ENCODE measurements at regions of chr19 and their contacts with region 1.

Region 1: DNA sequence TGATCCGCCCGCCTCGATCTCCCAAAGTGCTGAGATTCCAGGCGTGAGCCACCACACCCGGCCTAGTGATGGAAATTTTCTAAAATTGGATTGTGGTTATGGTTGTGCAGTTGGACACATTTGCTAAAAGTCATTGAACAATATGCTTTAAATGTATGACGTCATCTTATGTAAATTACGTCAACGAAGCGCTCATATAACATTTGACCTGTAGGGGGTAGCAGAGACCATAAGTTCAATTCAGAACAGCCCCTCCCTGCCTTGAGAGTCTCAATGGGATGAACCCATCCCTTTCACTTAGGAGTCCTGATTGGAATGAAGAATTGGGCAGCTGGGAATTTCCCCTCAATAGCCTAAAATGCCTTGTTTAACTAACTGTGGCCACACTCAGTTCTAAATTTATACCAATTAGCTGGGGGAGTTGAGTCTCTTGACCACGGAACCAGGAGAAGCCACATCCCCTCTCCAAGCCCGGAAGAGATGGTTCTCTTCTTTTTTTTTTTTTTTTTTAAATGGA is 15.3 kb upstream of the TLE6 start:
- DNase-seq: peak; percentile 49 to 91
- H3K4me3 ChIP-seq: peak overlapping the region in 1 of 4 donors; percentile 15
- H3K27ac ChIP-seq: no peak overlapping the region
- H3K4me1 ChIP-seq: peaks cover 0 to 10% (median 4%) of the 10 kb centered on the region in 4 donors
- H3K27me3 ChIP-seq: no peaks in the 10 kb centered on the region
- CTCF ChIP-seq: peak in 5 of 7 experiments; percentile 48 to 95 (median 80)
- EP300 ChIP-seq: no peak
- POLR2A ChIP-seq: no peak

Region 2: DNA sequence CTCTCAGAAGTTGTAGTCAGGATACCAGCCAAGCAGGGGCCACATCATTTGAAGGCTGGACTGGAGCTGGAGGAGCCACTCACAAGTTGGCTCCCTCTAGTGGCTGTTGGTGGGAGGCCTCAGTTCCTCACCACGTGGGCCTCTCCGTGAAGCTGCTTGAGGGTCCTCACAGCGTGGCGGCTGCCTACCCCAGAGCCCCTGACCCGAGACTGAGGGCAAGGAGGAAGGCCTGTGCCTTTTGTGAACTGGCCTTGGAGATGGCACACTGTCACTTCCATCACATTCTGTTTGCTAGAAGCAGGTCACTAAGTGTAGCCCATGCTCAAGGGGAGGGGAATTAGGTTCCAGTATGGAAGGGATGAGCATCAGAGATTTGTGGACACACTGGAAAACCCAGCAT is 146.7 kb after region 1 on chr19:
- intact Hi-C with region 1: loop called (anchors 5 kb)
- DNase-seq: peak; percentile 69 to 83
- H3K4me3 ChIP-seq: no peak overlapping the region
- H3K27ac ChIP-seq: no peak overlapping the region
- H3K4me1 ChIP-seq: peaks cover 16 to 57% (median 49%) of the 10 kb centered on the region in 4 donors
- H3K27me3 ChIP-seq: no peaks in the 10 kb centered on the region
- CTCF ChIP-seq: peak in 5 of 7 experiments; percentile 59 to 83 (median 81)
- EP300 ChIP-seq: no peak
- POLR2A ChIP-seq: no peak

Region 3: DNA sequence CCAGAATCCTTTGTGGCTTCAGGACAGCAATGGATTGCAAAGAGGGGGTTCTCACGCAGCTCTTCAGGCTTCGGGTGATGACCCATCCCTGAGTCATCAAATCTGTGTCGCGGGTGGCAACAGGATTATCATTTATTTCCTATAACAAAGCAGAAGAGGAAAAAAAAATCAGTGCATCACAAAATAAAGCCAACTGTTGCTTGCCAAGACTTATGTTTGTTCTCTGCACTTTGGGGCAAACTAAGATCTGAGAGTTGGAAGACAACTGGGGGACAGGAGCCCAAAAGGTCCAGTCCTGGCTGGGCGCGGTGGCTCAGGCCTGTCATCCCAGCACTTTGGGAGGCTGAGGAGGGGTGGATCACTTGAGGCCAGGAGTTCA is 180.2 kb after region 1 on chr19:
- intact Hi-C with region 1: no loop called
- DNase-seq: no peak
- H3K4me3 ChIP-seq: no peak overlapping the region
- H3K27ac ChIP-seq: peak overlapping the region; percentile 34 to 74 (median 53)
- H3K4me1 ChIP-seq: peaks cover 0 to 34% (median 14%) of the 10 kb centered on the region in 4 donors
- H3K27me3 ChIP-seq: peaks cover 0 to 13% (median 0%) of the 10 kb centered on the region in 3 donors
- CTCF ChIP-seq: no peak
- EP300 ChIP-seq: no peak
- POLR2A ChIP-seq: no peak

Region 4: GRCh38 chr19:3171894-3172672 is 210.0 kb after region 1 on chr19:
- intact Hi-C with region 1: loop called (anchors 5 kb)
- DNase-seq: no peak
- H3K4me3 ChIP-seq: no peak overlapping the region
- H3K27ac ChIP-seq: peak overlapping the region in 2 of 5 donors; percentile 51 to 56
- H3K4me1 ChIP-seq: peaks cover 9 to 19% (median 17%) of the 10 kb centered on the region in 4 donors
- H3K27me3 ChIP-seq: peaks cover 0 to 10% (median 0%) of the 10 kb centered on the region in 3 donors
- CTCF ChIP-seq: no peak
- EP300 ChIP-seq: no peak
- POLR2A ChIP-seq: no peak

Measured in stomach (tissue), 19 donors.